Naive thymus-derived CD4-positive, alpha-beta T cell (primary cell): ENCODE measurements at regions of chr6 and their contacts with region 1.

Region 1: GRCh38 chr6:109690737-109691621 is at the starts of genes AK9 and FIG4:
- DNase-seq: peak; percentile 72 to 88 (median 83)
- ATAC-seq: peak; percentile 98
- H3K4me3 ChIP-seq: peak within 1 kb of the TSS; percentile 98
- H3K4me3 Mint-ChIP-seq: peak within 1 kb of the TSS; percentile 91 to 100 (median 96)
- H3K27ac ChIP-seq: peak within 1 kb of the TSS; percentile 74
- H3K27ac Mint-ChIP-seq: peak within 1 kb of the TSS; percentile 92 to 99 (median 96)
- H3K4me1 ChIP-seq: peaks cover 12 to 13% of the 10 kb centered on the region in 2 donors
- H3K4me1 Mint-ChIP-seq: peaks cover 21 to 48% (median 34%) of the 10 kb centered on the region in 7 donors
- H3K27me3 ChIP-seq: no peaks in the 10 kb centered on the region
- H3K27me3 Mint-ChIP-seq: peaks cover 0 to 13% (median 0%) of the 10 kb centered on the region in 5 donors
- total RNA-seq, gene AK9: 5.8 to 19.5 (median 11.5) TPM
- total RNA-seq, gene FIG4: 6.8 to 16.5 (median 13.0) TPM

Region 2: GRCh38 chr6:108294727-108295625 is 1396.0 kb before region 1 on chr6 and contains the start of gene AFG1L:
- CTCF ChIA-PET with region 1: no interaction called
- POLR2A ChIA-PET with region 1: no interaction called
- intact Hi-C with region 1: loop called in 1 of 2 experiments (anchors 1 kb)
- DNase-seq: peak; percentile 81 to 90 (median 88)
- ATAC-seq: peak; percentile 96
- H3K4me3 ChIP-seq: peak within 1 kb of the TSS; percentile 99
- H3K4me3 Mint-ChIP-seq: peak within 1 kb of the TSS; percentile 93 to 99 (median 98)
- H3K27ac ChIP-seq: peak within 1 kb of the TSS; percentile 88
- H3K27ac Mint-ChIP-seq: peak within 1 kb of the TSS; percentile 95 to 100 (median 99)
- H3K4me1 ChIP-seq: peaks cover 10 to 13% of the 10 kb centered on the region in 2 donors
- H3K4me1 Mint-ChIP-seq: peaks cover 11 to 37% (median 26%) of the 10 kb centered on the region in 7 donors
- H3K27me3 ChIP-seq: no peaks in the 10 kb centered on the region
- H3K27me3 Mint-ChIP-seq: peaks cover 0 to 3% (median 0%) of the 10 kb centered on the region in 5 donors
- total RNA-seq, gene AFG1L: 4.1 to 9.2 (median 7.2) TPM

Region 3: GRCh38 chr6:109236115-109237076 is 454.6 kb before region 1 on chr6:
- CTCF ChIA-PET with region 1: no interaction called
- POLR2A ChIA-PET with region 1: no interaction called
- intact Hi-C with region 1: loop called in 1 of 2 experiments (anchors 2 kb)
- DNase-seq: peak in 3 of 9 donors; percentile 12 to 34 (median 32)
- ATAC-seq: peak; percentile 56
- H3K4me3 ChIP-seq: no peak overlapping the region
- H3K4me3 Mint-ChIP-seq: peak overlapping the region; percentile 0 to 73 (median 26)
- H3K27ac ChIP-seq: no peak overlapping the region
- H3K27ac Mint-ChIP-seq: peak overlapping the region in 8 of 9 donors; percentile 2 to 90 (median 42)
- H3K4me1 ChIP-seq: no peaks in the 10 kb centered on the region
- H3K4me1 Mint-ChIP-seq: peaks cover 6 to 25% (median 18%) of the 10 kb centered on the region in 7 donors
- H3K27me3 ChIP-seq: no peaks in the 10 kb centered on the region
- H3K27me3 Mint-ChIP-seq: peaks cover 0 to 3% (median 0%) of the 10 kb centered on the region in 5 donors

Region 4: DNA sequence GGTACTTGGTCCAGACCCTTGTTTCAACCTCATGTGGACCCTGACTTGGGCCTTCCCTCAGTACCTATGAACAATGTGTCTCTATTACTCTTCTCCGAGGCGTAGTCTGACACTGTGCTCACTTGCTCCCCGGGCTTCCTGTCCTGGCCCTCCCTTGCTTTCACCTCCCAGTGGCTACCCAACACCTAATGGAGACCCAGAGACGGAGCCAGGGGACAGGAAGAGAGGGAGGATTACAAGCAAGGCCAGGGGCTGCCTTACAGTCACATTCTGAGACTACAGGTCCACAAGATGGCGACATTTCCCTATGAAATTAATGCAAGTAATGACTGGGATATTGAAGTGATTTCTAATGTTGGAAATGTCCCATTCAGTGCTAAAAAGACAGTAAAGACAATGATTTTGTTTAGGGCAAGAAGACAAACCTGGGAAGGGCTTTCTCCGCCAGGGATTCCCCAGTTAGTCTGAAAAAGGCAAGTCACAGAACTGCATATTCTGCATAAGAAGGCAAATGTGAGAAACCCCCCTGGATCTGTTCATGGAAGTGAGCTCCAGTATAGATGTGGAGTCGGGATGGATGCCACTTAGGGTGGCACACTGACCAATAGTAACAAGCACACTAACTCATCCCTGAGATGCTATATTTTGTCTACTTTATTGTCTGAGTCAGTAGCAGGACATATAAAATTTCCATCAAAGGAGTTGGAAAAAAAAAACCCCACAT is 163.9 kb before region 1 on chr6:
- CTCF ChIA-PET with region 1: interaction called, 3 read pairs
- POLR2A ChIA-PET with region 1: no interaction called
- intact Hi-C with region 1: loop called (anchors 1 to 2 kb)
- DNase-seq: peak; percentile 7 to 70 (median 59)
- ATAC-seq: peak; percentile 79
- H3K4me3 ChIP-seq: no peak overlapping the region
- H3K4me3 Mint-ChIP-seq: no peak overlapping the region
- H3K27ac ChIP-seq: no peak overlapping the region
- H3K27ac Mint-ChIP-seq: peak overlapping the region in 1 of 9 donors; percentile 86
- H3K4me1 ChIP-seq: no peaks in the 10 kb centered on the region
- H3K4me1 Mint-ChIP-seq: peaks cover 0 to 4% (median 0%) of the 10 kb centered on the region in 7 donors
- H3K27me3 ChIP-seq: no peaks in the 10 kb centered on the region
- H3K27me3 Mint-ChIP-seq: peaks cover 0 to 6% (median 0%) of the 10 kb centered on the region in 5 donors

Region 5: GRCh38 chr6:109718991-109719390 is 28.0 kb after region 1 on chr6:
- CTCF ChIA-PET with region 1: no interaction called
- POLR2A ChIA-PET with region 1: no interaction called
- intact Hi-C with region 1: no loop called
- DNase-seq: no peak
- ATAC-seq: no peak
- H3K4me3 ChIP-seq: no peak overlapping the region
- H3K4me3 Mint-ChIP-seq: no peak overlapping the region
- H3K27ac ChIP-seq: no peak overlapping the region
- H3K27ac Mint-ChIP-seq: no peak overlapping the region
- H3K4me1 ChIP-seq: no peaks in the 10 kb centered on the region
- H3K4me1 Mint-ChIP-seq: peaks cover 0 to 6% (median 0%) of the 10 kb centered on the region in 7 donors
- H3K27me3 ChIP-seq: no peaks in the 10 kb centered on the region
- H3K27me3 Mint-ChIP-seq: no peaks in the 10 kb centered on the region

Region 6: DNA sequence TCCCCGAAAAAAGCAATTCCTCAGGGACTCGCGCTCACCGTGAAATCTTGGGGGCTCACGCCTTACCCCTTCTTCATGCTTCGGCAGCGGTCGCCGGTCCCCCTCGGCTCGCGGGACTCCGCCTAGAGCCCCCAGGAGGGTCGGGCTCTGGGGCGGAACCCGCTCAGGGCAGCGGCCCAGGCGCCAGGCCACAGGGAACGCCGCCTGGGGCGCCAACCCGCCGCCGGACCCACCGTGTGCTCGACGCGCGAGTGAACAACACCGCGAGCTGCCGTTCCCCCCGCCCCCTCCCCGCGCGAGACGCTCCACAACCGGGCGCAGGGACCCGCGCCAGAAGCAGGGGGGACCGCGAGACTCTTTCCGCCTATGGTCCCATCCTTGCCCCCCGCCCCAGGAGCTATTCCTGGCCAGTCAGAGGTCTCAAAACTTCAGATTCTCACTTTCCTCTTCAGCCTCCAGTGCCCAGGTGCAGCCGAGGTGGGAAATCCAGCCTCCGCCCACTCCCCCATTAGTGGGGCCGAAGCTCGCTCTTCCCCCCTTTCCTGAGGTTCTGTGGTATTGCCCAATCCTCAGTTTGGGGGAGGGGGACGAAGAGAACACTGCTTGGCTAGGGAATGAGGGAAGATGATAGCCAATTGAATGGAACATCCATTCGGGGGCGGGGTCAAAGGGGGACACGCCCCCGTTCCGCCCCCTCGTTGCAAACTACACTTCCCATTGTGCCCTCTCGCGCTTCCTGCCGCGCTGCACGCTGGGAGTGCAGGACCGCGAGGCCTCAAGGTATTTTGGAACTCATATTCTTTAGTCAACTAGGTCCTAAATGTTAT is 488.6 kb after region 1 on chr6 and contains the start of gene WASF1:
- CTCF ChIA-PET with region 1: interaction called, 3 read pairs
- POLR2A ChIA-PET with region 1: interaction called, 3 read pairs
- intact Hi-C with region 1: loop called (anchors 1 kb)
- DNase-seq: peak; percentile 84 to 94 (median 91)
- ATAC-seq: peak; percentile 96
- H3K4me3 ChIP-seq: peak within 1 kb of the TSS; percentile 83
- H3K4me3 Mint-ChIP-seq: peak within 1 kb of the TSS in 6 of 10 donors; percentile 84 to 90 (median 88)
- H3K27ac ChIP-seq: peak within 1 kb of the TSS; percentile 90
- H3K27ac Mint-ChIP-seq: peak within 1 kb of the TSS in 8 of 9 donors; percentile 2 to 87 (median 66)
- H3K4me1 ChIP-seq: peaks cover 17 to 23% of the 10 kb centered on the region in 2 donors
- H3K4me1 Mint-ChIP-seq: peaks cover 4 to 8% (median 5%) of the 10 kb centered on the region in 7 donors
- H3K27me3 ChIP-seq: peaks cover 0 to 7% of the 10 kb centered on the region in 2 donors
- H3K27me3 Mint-ChIP-seq: peaks cover 8 to 21% (median 9%) of the 10 kb centered on the region in 5 donors
- total RNA-seq, gene WASF1: 0.19 to 4.7 (median 0.51) TPM

Region 7: GRCh38 chr6:110255211-110255755 is 564.3 kb after region 1 on chr6:
- CTCF ChIA-PET with region 1: no interaction called
- POLR2A ChIA-PET with region 1: no interaction called
- intact Hi-C with region 1: no loop called
- DNase-seq: no peak
- ATAC-seq: no peak
- H3K4me3 ChIP-seq: no peak overlapping the region
- H3K4me3 Mint-ChIP-seq: no peak overlapping the region
- H3K27ac ChIP-seq: no peak overlapping the region
- H3K27ac Mint-ChIP-seq: no peak overlapping the region
- H3K4me1 ChIP-seq: no peaks in the 10 kb centered on the region
- H3K4me1 Mint-ChIP-seq: no peaks in the 10 kb centered on the region
- H3K27me3 ChIP-seq: no peaks in the 10 kb centered on the region
- H3K27me3 Mint-ChIP-seq: peaks cover 0 to 24% (median 13%) of the 10 kb centered on the region in 5 donors

Region 8: DNA sequence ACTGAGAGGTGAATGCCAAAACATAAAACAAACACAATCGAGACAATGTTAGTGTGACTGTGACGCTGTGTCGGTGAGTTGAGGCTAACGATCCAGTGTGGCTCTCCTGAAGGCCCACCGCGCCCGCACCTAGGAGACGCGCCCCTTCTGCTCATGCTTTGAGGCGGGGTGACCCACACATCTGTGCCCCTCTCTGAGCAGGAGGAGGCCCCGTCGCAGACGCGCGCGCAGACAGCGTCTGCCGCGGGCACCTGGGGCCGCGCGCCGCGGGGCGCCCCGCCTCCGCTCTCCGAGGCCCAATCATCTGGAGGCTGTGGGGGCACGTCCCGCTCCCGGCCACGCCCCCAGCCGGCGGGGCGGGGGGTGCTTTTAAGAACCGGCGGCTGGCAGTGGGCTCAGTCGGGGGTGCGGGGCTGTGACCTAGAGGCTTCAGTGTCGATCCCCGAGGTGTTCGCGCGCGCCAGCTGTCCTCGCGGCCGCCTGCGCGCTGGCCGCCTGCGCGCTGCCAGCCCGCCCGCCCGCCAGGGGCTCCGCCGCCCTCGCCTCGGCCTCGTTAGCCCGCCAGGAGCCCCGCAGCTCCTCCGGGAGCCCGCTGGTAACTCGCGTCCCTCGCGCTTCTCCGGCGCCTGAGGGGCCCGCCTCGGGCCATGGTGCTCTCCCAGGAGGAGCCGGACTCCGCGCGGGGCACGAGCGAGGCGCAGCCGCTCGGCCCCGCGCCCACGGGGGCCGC is 1396.3 kb after region 1 on chr6 and contains the start of gene SLC16A10:
- CTCF ChIA-PET with region 1: no interaction called
- POLR2A ChIA-PET with region 1: no interaction called
- intact Hi-C with region 1: loop called in 1 of 2 experiments (anchors 2 kb)
- DNase-seq: peak; percentile 75 to 92 (median 90)
- ATAC-seq: peak; percentile 95
- H3K4me3 ChIP-seq: peak within 1 kb of the TSS; percentile 83
- H3K4me3 Mint-ChIP-seq: peak within 1 kb of the TSS; percentile 85 to 100 (median 97)
- H3K27ac ChIP-seq: peak within 1 kb of the TSS; percentile 80
- H3K27ac Mint-ChIP-seq: peak within 1 kb of the TSS; percentile 54 to 99 (median 96)
- H3K4me1 ChIP-seq: peaks cover 10 to 17% of the 10 kb centered on the region in 2 donors
- H3K4me1 Mint-ChIP-seq: peaks cover 20 to 54% (median 48%) of the 10 kb centered on the region in 7 donors
- H3K27me3 ChIP-seq: no peaks in the 10 kb centered on the region
- H3K27me3 Mint-ChIP-seq: peaks cover 0 to 24% (median 0%) of the 10 kb centered on the region in 5 donors
- total RNA-seq, gene SLC16A10: 1.6 to 27.7 (median 16.7) TPM